Prostate gland (tissue), 2 donors: ENCODE measurements at regions of chr15 and their contacts with region 1.

Region 1: DNA sequence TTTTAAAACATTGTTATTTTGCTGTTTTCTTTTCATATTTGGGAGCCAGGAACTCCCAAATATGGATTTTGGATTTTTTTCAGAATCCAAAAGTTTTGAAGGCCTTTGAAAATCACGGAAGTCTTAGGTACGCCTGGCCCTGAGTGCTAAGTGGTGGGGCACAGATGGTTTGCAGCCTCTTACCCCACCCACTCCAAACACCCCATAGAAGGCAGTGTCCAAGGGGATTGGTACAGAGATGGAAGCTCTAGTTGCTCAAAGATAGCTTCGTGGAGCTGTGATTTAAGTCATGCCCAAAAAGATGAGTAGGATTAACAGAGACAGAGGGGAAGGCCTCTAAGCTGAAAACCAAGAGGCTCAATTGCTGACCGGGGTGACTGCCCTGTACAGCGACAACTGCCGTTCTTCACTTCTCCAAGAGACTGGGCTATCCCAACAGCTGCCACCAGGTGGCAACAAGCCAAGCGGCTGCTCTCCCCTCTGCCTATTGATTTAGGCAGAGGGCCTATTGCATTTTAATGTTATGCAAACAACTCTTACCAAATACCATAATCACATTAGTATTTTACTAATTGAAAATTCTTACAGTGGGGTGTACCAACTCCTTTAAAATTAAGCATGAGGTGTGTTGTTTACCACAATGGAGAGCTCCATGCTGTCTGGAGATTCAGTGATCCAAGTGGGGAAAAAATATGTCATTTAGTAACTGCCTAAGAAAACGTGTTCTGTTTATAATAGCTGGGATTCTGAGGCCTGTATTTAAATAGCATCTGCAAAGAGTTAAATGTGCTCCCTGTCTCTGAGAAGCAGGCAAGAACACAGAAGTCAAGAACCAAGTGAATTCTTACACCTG is 64.0 kb upstream of the C15orf61 start:
- DNase-seq: peak; percentile 77
- H3K4me3 ChIP-seq: no peak overlapping the region
- H3K27ac ChIP-seq: no peak overlapping the region
- H3K4me1 ChIP-seq: no peaks in the 10 kb centered on the region
- H3K27me3 ChIP-seq: no peaks in the 10 kb centered on the region
- CTCF ChIP-seq: peak; percentile 72 to 78 (median 76)
- POLR2A ChIP-seq: no peak

Region 2: GRCh38 chr15:67829647-67830504 is 373.0 kb after region 1 on chr15:
- intact Hi-C with region 1: loop called (anchors 2 kb)
- DNase-seq: no peak
- H3K4me3 ChIP-seq: no peak overlapping the region
- H3K27ac ChIP-seq: no peak overlapping the region
- H3K4me1 ChIP-seq: peaks cover 25% of the 10 kb centered on the region
- H3K27me3 ChIP-seq: peaks cover 62% of the 10 kb centered on the region
- CTCF ChIP-seq: no peak
- POLR2A ChIP-seq: no peak

Region 3: DNA sequence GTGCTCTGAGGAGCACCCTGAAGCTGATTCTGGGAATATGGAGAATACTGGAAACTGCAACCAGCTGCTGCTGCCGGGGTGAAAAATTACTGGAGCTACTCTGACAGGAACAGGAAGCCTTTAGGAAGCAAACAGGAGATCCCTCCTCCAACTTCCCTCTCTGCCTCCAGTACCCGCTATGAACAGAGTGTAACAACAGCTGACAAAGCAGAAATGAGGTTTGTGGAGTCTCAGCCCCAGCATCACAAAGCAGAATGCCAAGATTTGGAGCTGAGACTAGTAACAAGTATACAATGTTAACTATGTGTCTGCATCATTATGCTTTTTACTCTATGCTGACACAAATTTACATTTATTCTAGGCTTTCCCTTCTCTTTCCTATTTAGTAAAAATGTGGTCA is 574.5 kb after region 1 on chr15:
- intact Hi-C with region 1: no loop called
- DNase-seq: no peak
- H3K4me3 ChIP-seq: no peak overlapping the region
- H3K27ac ChIP-seq: no peak overlapping the region
- H3K4me1 ChIP-seq: no peaks in the 10 kb centered on the region
- H3K27me3 ChIP-seq: no peaks in the 10 kb centered on the region
- CTCF ChIP-seq: no peak
- POLR2A ChIP-seq: no peak